Mammary epithelial cell (primary cell): ENCODE measurements at regions of chr18 and their contacts with region 1.

Region 1: GRCh38 chr18:57561728-57562423 is 24.6 kb downstream of the FECH start:
- DNase-seq: peak; percentile 19
- H3K4me3 ChIP-seq: no peak overlapping the region
- H3K27ac ChIP-seq: no peak overlapping the region
- H3K4me1 ChIP-seq: no peaks in the 10 kb centered on the region
- H3K27me3 ChIP-seq: no peaks in the 10 kb centered on the region
- CTCF ChIP-seq: peak; percentile 66 to 71

Region 2: DNA sequence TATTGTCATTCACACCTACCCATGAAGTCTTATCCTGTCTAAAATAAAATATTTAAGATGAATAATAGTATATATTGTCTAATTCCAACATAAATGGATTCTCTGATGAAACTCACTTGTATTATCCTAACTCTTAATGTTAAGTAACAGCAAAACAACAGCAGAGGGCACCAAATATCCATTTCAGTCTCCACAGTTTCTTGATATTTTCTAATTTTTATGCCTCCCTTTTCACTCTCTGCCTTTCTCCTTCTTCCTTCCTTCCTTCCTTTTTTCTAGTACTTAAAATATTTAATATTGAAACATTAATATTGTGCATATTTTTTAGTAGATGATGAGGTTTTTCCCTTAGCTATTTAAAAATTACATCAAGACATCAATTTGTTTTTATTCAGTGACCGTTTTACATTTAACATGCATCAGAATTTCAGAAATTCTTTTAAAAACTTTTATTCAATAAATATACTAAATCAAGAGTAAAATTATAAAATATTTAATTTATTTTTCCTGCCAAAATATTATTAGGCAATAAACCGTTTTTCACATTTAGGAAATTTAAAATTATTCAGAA is 813.1 kb before region 1 on chr18:
- CTCF ChIA-PET with region 1: interaction called, 10 read pairs
- dilution Hi-C with region 1: no loop called
- in situ Hi-C with region 1: no loop called
- intact Hi-C with region 1: loop called (anchors 1 kb)
- DNase-seq: peak; percentile 4
- H3K4me3 ChIP-seq: no peak overlapping the region
- H3K27ac ChIP-seq: no peak overlapping the region
- H3K4me1 ChIP-seq: no peaks in the 10 kb centered on the region
- H3K27me3 ChIP-seq: no peaks in the 10 kb centered on the region
- CTCF ChIP-seq: peak; percentile 45 to 57

Region 3: DNA sequence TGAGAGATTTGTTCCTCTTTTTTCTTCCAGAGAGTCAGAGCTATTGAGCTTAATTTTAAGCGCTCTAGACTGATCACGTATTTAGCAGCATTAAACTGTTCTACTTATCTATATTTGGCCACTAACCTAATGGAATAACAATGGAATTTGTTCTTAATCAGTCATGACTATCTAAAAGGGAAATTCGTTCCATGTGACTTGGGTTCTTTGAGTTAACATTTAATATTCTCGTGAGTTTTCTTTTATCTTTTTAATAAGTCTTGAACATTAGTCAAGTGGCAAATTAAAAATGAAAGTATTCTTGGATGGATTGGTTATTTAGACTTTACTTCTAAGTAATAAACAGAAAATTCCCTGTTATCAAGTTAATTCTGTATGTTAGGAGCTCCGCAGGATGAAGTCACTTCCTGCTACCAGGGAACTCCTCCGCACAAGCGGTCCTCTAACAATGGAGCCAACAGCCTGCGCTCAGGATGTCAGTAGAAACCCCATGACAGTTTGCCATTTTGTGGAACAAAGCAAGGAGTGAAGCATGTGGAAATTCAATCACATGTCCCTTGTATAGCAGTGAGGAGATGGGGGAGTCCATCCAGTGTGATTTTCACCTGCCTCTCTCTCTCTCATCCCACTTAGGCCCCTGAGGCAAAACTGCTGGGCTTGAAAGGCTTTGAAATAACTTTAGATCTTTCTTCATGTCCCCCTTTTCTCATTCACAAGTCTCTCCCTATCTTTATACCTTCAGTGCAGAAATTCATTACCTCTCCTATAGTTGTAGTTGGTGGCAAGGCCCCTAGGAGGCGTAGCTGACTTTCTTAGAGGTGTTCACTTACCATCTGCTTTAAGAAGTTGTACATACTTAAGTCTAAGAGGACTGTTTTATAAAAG is 772.6 kb before region 1 on chr18:
- CTCF ChIA-PET with region 1: no interaction called
- dilution Hi-C with region 1: no loop called
- in situ Hi-C with region 1: loop called in 1 of 2 experiments (anchors 25 kb)
- intact Hi-C with region 1: loop called (anchors 5 kb)
- DNase-seq: peak; percentile 14
- H3K4me3 ChIP-seq: no peak overlapping the region
- H3K27ac ChIP-seq: no peak overlapping the region
- H3K4me1 ChIP-seq: no peaks in the 10 kb centered on the region
- H3K27me3 ChIP-seq: no peaks in the 10 kb centered on the region
- CTCF ChIP-seq: peak; percentile 65 to 72

Region 4: GRCh38 chr18:57051657-57052044 is 510.2 kb before region 1 on chr18:
- CTCF ChIA-PET with region 1: no interaction called
- dilution Hi-C with region 1: no loop called
- in situ Hi-C with region 1: no loop called
- intact Hi-C with region 1: loop called (anchors 5 kb)
- DNase-seq: no peak
- H3K4me3 ChIP-seq: no peak overlapping the region
- H3K27ac ChIP-seq: no peak overlapping the region
- H3K4me1 ChIP-seq: no peaks in the 10 kb centered on the region
- H3K27me3 ChIP-seq: no peaks in the 10 kb centered on the region
- CTCF ChIP-seq: no peak

Region 5: GRCh38 chr18:57209713-57210661 is 351.9 kb before region 1 on chr18:
- CTCF ChIA-PET with region 1: no interaction called
- dilution Hi-C with region 1: no loop called
- in situ Hi-C with region 1: no loop called
- intact Hi-C with region 1: no loop called
- DNase-seq: peak; percentile 81
- H3K4me3 ChIP-seq: no peak overlapping the region
- H3K27ac ChIP-seq: peak overlapping the region; percentile 73
- H3K4me1 ChIP-seq: peaks cover 23% of the 10 kb centered on the region
- H3K27me3 ChIP-seq: no peaks in the 10 kb centered on the region
- CTCF ChIP-seq: no peak

Region 6: DNA sequence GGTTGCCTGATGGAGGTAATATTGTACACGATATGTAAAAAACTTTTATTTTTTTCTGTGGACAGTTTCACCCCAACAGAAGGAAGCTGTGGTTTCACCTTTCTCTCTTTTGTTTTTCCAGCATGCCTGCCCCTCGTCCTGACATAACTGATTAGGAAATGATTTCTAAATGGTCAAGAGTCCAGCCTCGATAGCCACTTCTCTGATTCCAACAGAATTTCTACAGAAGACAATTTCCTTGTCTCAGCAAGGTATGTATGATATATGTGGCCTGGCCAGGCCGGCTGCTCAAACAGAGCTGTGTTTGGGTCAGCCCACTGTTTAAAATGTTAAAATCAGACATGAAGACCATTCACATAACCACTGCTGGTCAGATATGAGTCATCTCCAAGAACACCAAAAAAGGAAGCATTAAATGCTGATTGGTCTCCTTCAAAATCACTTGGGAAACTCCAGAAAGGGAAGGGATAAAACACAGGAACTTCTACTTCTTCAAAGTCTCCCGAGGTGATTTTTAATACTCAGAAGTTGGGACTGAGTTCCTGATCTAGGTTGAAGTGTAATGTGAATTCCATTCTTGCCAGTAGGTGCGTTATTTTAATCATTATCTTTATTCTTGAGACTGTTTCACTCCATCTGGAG is 219.0 kb after region 1 on chr18:
- CTCF ChIA-PET with region 1: no interaction called
- dilution Hi-C with region 1: no loop called
- in situ Hi-C with region 1: no loop called
- intact Hi-C with region 1: no loop called
- DNase-seq: peak; percentile 76
- H3K4me3 ChIP-seq: no peak overlapping the region
- H3K27ac ChIP-seq: peak overlapping the region; percentile 27
- H3K4me1 ChIP-seq: peaks cover 50% of the 10 kb centered on the region
- H3K27me3 ChIP-seq: no peaks in the 10 kb centered on the region
- CTCF ChIP-seq: no peak

Region 7: GRCh38 chr18:57859314-57859713 is 297.4 kb after region 1 on chr18:
- CTCF ChIA-PET with region 1: no interaction called
- dilution Hi-C with region 1: no loop called
- in situ Hi-C with region 1: no loop called
- intact Hi-C with region 1: no loop called
- DNase-seq: peak; percentile 40
- H3K4me3 ChIP-seq: no peak overlapping the region
- H3K27ac ChIP-seq: no peak overlapping the region
- H3K4me1 ChIP-seq: no peaks in the 10 kb centered on the region
- H3K27me3 ChIP-seq: no peaks in the 10 kb centered on the region
- CTCF ChIP-seq: peak; percentile 83 to 85